ENCODE measurements at regions of chr22 and their contacts with region 1.

Region 1: DNA sequence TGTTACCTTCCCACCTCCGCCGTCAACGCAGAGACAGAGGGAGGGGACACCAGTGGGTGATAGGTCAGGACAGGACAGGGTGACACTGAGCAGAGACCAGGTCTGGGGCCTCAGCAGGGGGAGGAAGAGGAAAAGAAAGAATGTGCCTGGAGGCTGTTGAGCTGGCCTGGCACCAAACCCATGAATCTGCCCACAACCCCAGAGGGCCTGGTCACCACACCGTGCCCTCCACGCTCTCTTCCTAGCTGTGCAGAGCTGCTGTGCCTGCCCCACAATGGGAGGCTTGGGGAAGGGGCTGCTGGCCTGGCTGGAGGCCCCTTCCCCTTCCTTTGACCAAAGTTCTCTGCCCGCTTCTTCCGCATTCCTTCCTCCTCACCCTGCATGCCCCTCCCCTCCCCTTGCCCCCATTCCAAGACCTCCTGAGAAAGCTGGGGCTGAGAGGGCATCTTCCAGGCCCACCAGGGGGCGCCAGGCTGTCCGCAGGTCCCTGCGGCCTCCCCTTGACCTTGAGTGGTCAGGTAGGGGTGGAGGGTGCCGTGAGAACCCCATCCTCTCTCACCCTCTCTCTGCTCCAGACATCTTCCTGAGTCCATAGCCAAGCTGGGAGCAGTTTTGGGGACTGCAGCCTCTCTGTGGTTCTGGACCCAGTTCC is 11.0 kb upstream of the CACNA1I start:
- DNase-seq: no peak
- H3K4me3 ChIP-seq: no peak overlapping the region
- H3K27ac ChIP-seq: no peak overlapping the region
- H3K27me3 ChIP-seq: peaks cover 42% of the 10 kb centered on the region
- CTCF ChIP-seq: peak; percentile 73

Region 2: GRCh38 chr22:40024201-40025061 is 464.9 kb after region 1 on chr22:
- in situ Hi-C with region 1: loop called (anchors 25 kb)
- DNase-seq: peak; percentile 46
- H3K4me3 ChIP-seq: no peak overlapping the region
- H3K27ac ChIP-seq: no peak overlapping the region
- H3K27me3 ChIP-seq: no peaks in the 10 kb centered on the region
- CTCF ChIP-seq: peak; percentile 98